Heart left ventricle (tissue), 16 donors: ENCODE measurements at regions of chr9 and their contacts with region 1.

Region 1: DNA sequence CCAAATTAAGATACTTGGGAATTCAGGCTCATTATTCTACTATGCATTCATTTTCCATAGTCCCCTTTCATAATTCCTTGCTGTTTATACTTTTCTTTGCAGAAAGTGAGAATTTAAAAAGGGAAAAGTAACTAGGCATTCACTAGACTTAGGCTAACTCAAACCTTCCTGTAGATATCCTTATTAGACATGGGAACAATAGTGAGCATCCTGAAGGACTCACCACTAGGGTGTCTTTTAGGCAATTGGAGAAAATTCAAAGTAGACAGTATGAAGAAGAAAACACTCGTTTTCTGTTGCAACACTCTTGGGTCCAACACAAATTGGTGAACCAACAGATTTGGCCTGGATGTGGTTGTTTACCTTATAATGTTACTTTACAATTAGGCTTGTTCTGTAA is 213.2 kb upstream of the GRIN3A start:
- DNase-seq: no peak
- ATAC-seq: no peak
- H3K4me3 ChIP-seq: no peak overlapping the region
- H3K27ac ChIP-seq: no peak overlapping the region
- H3K4me1 ChIP-seq: no peaks in the 10 kb centered on the region
- H3K27me3 ChIP-seq: no peaks in the 10 kb centered on the region
- CTCF ChIP-seq: no peak
- POLR2A ChIP-seq: no peak

Region 2: GRCh38 chr9:101832486-101832885 is 119.1 kb before region 1 on chr9:
- intact Hi-C with region 1: no loop called
- DNase-seq: no peak
- ATAC-seq: no peak
- H3K4me3 ChIP-seq: no peak overlapping the region
- H3K27ac ChIP-seq: no peak overlapping the region
- H3K4me1 ChIP-seq: no peaks in the 10 kb centered on the region
- H3K27me3 ChIP-seq: no peaks in the 10 kb centered on the region
- CTCF ChIP-seq: no peak
- POLR2A ChIP-seq: no peak

Region 3: GRCh38 chr9:101966691-101967090 is 15.1 kb after region 1 on chr9:
- intact Hi-C with region 1: loop called in 1 of 10 experiments (anchors 1 kb)
- DNase-seq: no peak
- ATAC-seq: no peak
- H3K4me3 ChIP-seq: no peak overlapping the region
- H3K27ac ChIP-seq: no peak overlapping the region
- H3K4me1 ChIP-seq: no peaks in the 10 kb centered on the region
- H3K27me3 ChIP-seq: no peaks in the 10 kb centered on the region
- CTCF ChIP-seq: no peak
- POLR2A ChIP-seq: no peak

Region 4: DNA sequence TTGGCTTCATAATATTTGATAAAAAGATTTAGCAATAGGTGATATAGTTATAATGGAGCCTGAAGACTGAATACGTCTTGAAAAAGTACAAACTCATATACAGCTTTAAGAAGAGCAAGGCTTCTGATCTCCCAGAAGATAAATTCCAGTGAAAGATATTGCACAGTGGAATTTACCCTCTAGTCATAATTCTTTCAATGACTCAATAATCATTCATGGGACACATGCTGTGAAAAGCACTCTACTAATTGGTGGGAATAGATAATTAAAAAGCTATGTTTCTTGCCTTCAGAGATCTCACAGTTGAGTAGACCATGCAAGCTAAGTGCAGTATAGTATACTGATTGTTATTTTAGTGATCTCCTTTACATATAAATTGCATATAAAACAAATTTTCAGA is 505.0 kb after region 1 on chr9:
- intact Hi-C with region 1: loop called in 1 of 10 experiments (anchors 5 kb)
- DNase-seq: no peak
- ATAC-seq: no peak
- H3K4me3 ChIP-seq: no peak overlapping the region
- H3K27ac ChIP-seq: no peak overlapping the region
- H3K4me1 ChIP-seq: no peaks in the 10 kb centered on the region
- H3K27me3 ChIP-seq: no peaks in the 10 kb centered on the region
- CTCF ChIP-seq: no peak
- POLR2A ChIP-seq: no peak